ENCODE measurements at regions of chr13 and their contacts with region 1.

Region 1: GRCh38 chr13:24270639-24271141 is 38.7 kb upstream of the C1QTNF9 start:
- DNase-seq: peak; percentile 78
- H3K4me3 Mint-ChIP-seq: peak overlapping the region; percentile 89
- H3K27ac Mint-ChIP-seq: peak overlapping the region; percentile 97
- H3K4me1 Mint-ChIP-seq: peaks cover 80% of the 10 kb centered on the region
- H3K27me3 Mint-ChIP-seq: peaks cover 2% of the 10 kb centered on the region

Region 2: DNA sequence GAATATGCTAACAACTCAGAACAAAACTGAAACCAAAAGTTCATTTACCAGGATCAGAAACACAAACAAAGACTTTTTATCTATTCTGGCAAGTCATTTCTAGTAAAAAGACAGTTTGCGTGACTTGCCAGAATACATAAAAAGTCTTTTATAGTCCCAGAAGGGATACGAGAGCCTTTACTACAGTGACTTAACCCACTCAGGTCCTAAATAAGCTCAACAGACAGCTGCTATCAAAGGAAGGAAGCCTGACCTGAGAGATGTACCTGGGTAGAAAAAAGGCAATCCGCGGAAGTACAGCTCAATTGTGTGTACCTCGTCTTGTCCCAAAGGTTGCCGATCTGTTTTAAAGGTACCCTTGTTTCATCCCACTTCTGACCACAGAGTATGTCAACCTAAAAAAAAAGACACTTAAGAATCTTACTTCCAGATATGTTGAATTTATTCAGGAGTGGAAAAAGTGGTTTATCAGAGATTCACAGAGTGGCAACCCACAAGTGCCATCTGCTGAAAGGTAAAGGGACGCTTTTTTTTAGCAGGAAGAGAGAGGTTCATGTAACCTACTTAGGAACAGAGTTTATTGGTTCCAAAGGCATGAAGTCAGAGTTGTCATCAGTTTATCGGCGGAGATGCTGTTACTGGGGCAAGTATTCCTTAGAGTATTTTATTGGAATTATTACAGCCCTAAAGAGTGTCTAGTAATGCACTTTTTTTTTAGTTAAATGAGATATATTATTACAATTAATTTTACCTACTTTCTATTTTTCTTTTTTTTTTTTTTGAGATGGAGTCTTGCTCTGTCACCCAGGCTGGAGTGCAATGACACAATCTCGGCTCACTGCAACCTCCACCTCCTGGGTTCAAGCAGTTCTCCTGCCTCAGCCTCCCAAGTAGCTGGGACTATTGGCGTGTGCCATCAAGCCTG is 303.7 kb before region 1 on chr13:
- CTCF ChIA-PET with region 1: no interaction called
- POLR2A ChIA-PET with region 1: no interaction called
- intact Hi-C with region 1: loop called (anchors 2 kb)
- DNase-seq: peak; percentile 31
- H3K4me3 Mint-ChIP-seq: peak overlapping the region; percentile 51
- H3K27ac Mint-ChIP-seq: peak overlapping the region; percentile 83
- H3K4me1 Mint-ChIP-seq: peaks cover 30% of the 10 kb centered on the region
- H3K27me3 Mint-ChIP-seq: no peaks in the 10 kb centered on the region

Region 3: DNA sequence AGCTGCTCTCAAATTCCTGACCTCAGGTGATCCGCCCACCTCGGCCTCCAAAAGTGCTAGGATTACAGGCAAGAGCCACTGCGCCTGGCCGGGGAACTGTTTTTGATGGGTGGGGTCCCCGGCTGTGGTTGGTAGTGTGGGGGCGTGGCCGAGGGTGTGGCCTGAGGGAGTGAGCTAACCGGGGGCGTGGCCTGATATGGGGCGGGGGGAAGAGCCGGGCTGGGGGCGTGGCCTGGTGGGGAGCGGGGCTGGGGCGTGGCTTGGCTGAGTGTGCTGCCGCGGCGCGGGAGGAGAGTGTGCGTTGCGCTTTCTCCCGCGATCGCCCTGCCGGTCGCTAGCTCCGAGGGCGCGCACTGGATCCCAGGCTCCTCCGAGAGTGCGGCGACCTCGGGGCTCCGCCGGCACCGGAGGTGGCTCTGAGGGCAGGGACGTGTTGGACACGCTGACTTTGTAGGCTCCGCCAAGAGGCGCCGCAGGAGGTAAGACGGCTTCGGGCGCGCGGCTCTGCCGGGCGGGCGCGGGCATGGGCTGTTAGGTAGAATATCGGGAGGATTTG is 110.2 kb before region 1 on chr13 and contains the start of gene SPATA13:
- CTCF ChIA-PET with region 1: no interaction called
- POLR2A ChIA-PET with region 1: no interaction called
- intact Hi-C with region 1: loop called (anchors 5 kb)
- DNase-seq: peak; percentile 94
- H3K4me3 Mint-ChIP-seq: peak within 1 kb of the TSS; percentile 83
- H3K27ac Mint-ChIP-seq: no peak within 1 kb of the TSS
- H3K4me1 Mint-ChIP-seq: peaks cover 13% of the 10 kb centered on the region
- H3K27me3 Mint-ChIP-seq: peaks cover 11% of the 10 kb centered on the region
- total RNA-seq, gene SPATA13: 50.3 to 50.8 TPM

Region 4: DNA sequence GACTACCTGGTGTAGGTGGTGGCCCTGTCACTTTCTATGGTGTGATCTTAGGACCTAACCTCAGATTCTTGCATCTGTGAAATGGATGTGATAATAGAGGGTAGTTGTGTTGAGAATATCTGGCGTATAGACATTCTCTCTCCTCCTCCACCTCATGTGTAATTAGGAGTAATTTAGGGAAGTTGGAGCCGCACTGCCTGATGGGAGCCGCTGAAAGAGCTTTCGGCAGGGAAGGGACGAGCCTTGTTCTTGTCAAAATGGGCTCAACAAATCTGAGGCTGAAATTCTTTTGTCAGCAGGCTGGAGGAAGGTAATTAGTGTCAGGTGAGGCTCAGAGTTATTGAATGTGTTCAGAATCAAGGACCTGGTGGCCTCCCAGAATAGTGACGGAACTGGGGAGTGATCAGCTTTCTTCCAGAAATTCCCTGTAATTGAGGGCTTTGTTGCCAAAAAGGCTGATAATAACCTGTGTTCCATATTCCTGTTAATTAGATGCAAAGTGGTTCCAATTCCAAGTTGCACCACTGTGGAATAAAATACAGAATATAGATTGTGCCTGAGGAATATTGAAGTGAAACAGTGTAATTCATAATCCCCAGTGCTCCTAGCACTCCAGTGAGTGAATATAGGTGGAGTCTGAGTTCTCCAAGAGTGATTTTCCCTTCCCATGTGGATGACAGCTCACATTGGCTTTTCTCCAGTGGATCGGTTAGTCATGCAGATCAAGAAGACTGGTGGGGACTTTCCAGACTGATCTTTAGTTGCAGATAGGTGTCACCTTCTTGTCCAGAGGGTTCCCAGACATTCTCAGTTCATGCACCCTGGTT is 62.6 kb before region 1 on chr13:
- CTCF ChIA-PET with region 1: no interaction called
- POLR2A ChIA-PET with region 1: no interaction called
- intact Hi-C with region 1: no loop called
- DNase-seq: no peak
- H3K4me3 Mint-ChIP-seq: no peak overlapping the region
- H3K27ac Mint-ChIP-seq: no peak overlapping the region
- H3K4me1 Mint-ChIP-seq: peaks cover 12% of the 10 kb centered on the region
- H3K27me3 Mint-ChIP-seq: peaks cover 17% of the 10 kb centered on the region

Region 5: GRCh38 chr13:24254146-24254841 is 16.4 kb before region 1 on chr13:
- CTCF ChIA-PET with region 1: interaction called, 23 read pairs
- POLR2A ChIA-PET with region 1: interaction called, 131 read pairs
- intact Hi-C with region 1: loop called (anchors 1 kb)
- DNase-seq: peak; percentile 86
- H3K4me3 Mint-ChIP-seq: peak overlapping the region; percentile 87
- H3K27ac Mint-ChIP-seq: peak overlapping the region; percentile 95
- H3K4me1 Mint-ChIP-seq: peaks cover 73% of the 10 kb centered on the region
- H3K27me3 Mint-ChIP-seq: no peaks in the 10 kb centered on the region

Region 6: GRCh38 chr13:24512197-24512907 is 241.7 kb after region 1 on chr13 and contains the start of gene PARP4:
- CTCF ChIA-PET with region 1: no interaction called
- POLR2A ChIA-PET with region 1: interaction called, 6 read pairs
- intact Hi-C with region 1: loop called (anchors 1 kb)
- DNase-seq: peak; percentile 80
- H3K4me3 Mint-ChIP-seq: peak within 1 kb of the TSS; percentile 76
- H3K27ac Mint-ChIP-seq: peak within 1 kb of the TSS; percentile 94
- H3K4me1 Mint-ChIP-seq: peaks cover 28% of the 10 kb centered on the region
- H3K27me3 Mint-ChIP-seq: no peaks in the 10 kb centered on the region
- total RNA-seq, gene PARP4: 20.7 to 22.2 TPM

Region 7: GRCh38 chr13:24683838-24684599 is 413.3 kb after region 1 on chr13:
- CTCF ChIA-PET with region 1: no interaction called
- POLR2A ChIA-PET with region 1: no interaction called
- intact Hi-C with region 1: loop called (anchors 5 kb)
- DNase-seq: peak; percentile 79
- H3K4me3 Mint-ChIP-seq: peak overlapping the region; percentile 23
- H3K27ac Mint-ChIP-seq: no peak overlapping the region
- H3K4me1 Mint-ChIP-seq: peaks cover 30% of the 10 kb centered on the region
- H3K27me3 Mint-ChIP-seq: peaks cover 34% of the 10 kb centered on the region

Region 8: GRCh38 chr13:25901460-25902376 is 1631.0 kb after region 1 on chr13:
- CTCF ChIA-PET with region 1: no interaction called
- POLR2A ChIA-PET with region 1: no interaction called
- intact Hi-C with region 1: loop called (anchors 5 kb)
- DNase-seq: peak; percentile 44
- H3K4me3 Mint-ChIP-seq: peak overlapping the region; percentile 6
- H3K27ac Mint-ChIP-seq: no peak overlapping the region
- H3K4me1 Mint-ChIP-seq: peaks cover 26% of the 10 kb centered on the region
- H3K27me3 Mint-ChIP-seq: peaks cover 9% of the 10 kb centered on the region